ENCODE measurements at regions of chr2 and their contacts with region 1.

Region 1: DNA sequence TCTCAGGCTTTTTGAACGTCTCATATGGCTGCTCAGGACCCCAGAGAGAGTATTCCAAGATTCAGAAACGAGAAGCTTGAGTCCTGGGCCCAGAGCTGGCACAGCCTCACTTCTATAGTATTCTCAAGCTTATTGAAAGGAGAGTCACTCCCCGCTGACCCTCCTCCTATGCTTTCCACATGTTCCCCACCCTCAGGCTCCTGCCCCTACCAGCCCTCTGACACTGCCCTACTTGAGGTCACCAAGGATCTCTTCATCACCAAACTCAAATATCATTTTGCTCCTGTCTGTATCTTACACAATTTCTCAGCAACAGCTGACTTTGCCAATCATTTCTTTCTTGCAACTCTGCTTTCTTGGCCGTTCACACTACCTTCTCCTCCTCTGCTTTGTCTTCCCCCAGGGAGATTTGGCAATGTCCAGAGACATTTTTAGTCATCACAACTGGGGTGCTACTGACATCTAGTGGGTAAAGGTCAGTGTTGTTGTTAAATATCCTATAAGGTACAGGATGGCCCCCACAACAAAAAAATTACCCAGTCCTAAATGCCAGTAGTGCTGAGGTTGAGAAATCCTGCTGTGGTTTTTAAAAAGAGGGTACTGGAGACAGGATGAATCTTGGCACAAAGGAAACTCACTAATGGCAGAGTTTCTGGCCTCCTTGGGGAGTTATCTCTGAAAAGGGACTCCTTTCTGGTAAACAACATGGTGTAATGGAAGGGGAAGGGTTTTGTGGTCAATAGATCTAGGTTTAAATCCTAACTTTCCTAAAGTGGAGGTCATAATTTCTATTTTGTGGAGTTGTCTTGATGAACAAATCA is 26.9 kb upstream of the INSIG2 start:
- DNase-seq: peak; percentile 31 to 46 (median 39)
- H3K4me3 ChIP-seq: no peak overlapping the region
- H3K27ac ChIP-seq: no peak overlapping the region
- H3K4me1 ChIP-seq: peaks cover 6 to 9% (median 6%) of the 10 kb centered on the region in 4 experiments
- H3K27me3 ChIP-seq: no peaks in the 10 kb centered on the region

Region 2: DNA sequence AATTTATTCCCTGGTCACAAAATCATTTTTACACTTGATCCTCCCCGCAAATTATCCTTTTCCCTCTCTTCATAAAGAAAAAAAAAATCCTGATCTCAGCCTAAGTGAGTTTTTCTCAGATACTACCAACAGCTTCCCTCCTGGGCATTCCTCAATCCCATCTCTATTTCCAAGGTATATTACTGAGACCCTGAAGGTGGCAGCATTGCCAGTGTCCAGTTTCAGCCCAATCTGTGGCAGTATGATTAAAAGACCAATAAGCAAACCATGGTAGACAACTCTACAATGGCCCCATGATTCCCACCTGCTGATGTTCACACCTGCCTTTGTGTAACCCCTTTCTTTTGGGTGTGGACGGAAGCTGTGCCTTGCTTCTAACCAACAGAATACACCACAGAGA is 92.6 kb before region 1 on chr2:
- CTCF ChIA-PET with region 1: no interaction called
- POLR2A ChIA-PET with region 1: no interaction called
- DNase-seq: no peak
- H3K4me3 ChIP-seq: no peak overlapping the region
- H3K27ac ChIP-seq: no peak overlapping the region
- H3K4me1 ChIP-seq: no peaks in the 10 kb centered on the region
- H3K27me3 ChIP-seq: no peaks in the 10 kb centered on the region

Region 3: DNA sequence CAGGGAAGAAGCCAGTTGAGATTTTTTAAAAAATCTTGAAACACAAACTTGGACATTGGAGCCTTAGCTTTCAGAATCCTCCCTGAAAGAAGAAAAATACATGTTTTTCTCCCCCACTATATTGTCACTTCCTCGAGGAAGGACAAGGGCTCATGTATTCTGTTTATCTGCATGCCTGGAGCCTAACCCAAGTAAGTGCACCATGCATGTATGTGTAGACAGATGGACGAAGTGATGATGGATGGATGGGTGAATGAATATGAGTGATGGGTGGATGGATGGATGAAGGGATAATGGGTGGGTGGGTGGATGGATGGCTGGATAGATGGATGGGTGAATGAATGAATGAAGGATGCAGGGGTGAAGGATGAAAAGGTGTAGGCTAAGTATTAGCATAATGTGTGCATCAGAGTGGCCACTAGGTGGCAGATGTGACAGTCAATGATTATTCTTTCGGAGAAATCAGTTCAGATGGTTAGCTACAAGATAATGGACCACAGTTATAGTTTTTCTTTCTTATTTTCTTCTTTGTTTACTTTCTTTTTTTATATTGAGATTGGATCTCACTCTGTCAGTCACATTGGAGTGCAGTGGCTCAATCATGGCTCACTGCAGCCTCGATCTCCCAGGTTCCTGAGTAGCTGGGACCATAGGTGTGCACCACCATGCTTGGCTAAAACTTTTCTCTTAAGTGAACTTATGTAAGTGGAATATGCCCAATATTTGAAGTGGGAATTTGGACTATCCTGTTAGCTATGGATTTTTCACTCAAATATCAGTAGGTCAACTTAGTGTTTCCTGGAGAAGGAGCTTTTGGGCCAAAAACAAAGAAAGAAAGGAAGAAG is 29.0 kb before region 1 on chr2:
- CTCF ChIA-PET with region 1: interaction called, 20 read pairs
- POLR2A ChIA-PET with region 1: interaction called, 3 read pairs
- DNase-seq: peak; percentile 31 to 68 (median 63)
- H3K4me3 ChIP-seq: no peak overlapping the region
- H3K27ac ChIP-seq: no peak overlapping the region
- H3K4me1 ChIP-seq: no peaks in the 10 kb centered on the region
- H3K27me3 ChIP-seq: peaks cover 0 to 12% (median 6%) of the 10 kb centered on the region in 5 experiments

Region 4: DNA sequence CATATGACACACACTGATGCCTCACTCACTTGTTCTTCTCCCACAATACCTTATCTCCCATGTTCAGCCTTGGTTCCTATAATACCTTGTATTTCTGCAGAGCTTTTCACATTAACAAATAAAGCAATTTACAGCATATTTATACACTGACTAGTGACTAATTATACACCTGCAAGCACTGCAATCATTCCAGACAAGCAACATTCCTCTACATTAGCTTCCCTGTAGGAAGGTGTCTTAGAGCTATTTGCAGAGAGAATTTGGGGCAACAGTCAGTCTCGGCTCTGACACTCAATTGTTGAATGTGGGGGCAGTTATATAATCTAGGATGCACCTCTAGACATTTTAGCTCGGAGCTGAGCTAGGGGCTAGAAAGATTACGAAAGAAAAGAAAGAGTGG is 17.4 kb after region 1 on chr2:
- CTCF ChIA-PET with region 1: interaction called, 10 read pairs
- POLR2A ChIA-PET with region 1: no interaction called
- DNase-seq: no peak
- H3K4me3 ChIP-seq: no peak overlapping the region
- H3K27ac ChIP-seq: no peak overlapping the region
- H3K4me1 ChIP-seq: no peaks in the 10 kb centered on the region
- H3K27me3 ChIP-seq: peaks cover 0 to 3% (median 0%) of the 10 kb centered on the region in 5 experiments

Measured in common myeloid progenitor, CD34-positive (primary cell).